ENCODE measurements at regions of chr15 and their contacts with region 1.

Region 1: GRCh38 chr15:74540761-74541493 is at the start of gene ARID3B:
- DNase-seq: peak; percentile 98
- H3K4me3 ChIP-seq: peak within 1 kb of the TSS; percentile 99
- H3K27ac ChIP-seq: peak within 1 kb of the TSS; percentile 93
- H3K4me1 ChIP-seq: peaks cover 21% of the 10 kb centered on the region
- H3K27me3 ChIP-seq: no peaks in the 10 kb centered on the region
- CTCF ChIP-seq: no peak
- total RNA-seq, gene ARID3B: 17.3 and 18.3 TPM in 2 replicates

Region 2: DNA sequence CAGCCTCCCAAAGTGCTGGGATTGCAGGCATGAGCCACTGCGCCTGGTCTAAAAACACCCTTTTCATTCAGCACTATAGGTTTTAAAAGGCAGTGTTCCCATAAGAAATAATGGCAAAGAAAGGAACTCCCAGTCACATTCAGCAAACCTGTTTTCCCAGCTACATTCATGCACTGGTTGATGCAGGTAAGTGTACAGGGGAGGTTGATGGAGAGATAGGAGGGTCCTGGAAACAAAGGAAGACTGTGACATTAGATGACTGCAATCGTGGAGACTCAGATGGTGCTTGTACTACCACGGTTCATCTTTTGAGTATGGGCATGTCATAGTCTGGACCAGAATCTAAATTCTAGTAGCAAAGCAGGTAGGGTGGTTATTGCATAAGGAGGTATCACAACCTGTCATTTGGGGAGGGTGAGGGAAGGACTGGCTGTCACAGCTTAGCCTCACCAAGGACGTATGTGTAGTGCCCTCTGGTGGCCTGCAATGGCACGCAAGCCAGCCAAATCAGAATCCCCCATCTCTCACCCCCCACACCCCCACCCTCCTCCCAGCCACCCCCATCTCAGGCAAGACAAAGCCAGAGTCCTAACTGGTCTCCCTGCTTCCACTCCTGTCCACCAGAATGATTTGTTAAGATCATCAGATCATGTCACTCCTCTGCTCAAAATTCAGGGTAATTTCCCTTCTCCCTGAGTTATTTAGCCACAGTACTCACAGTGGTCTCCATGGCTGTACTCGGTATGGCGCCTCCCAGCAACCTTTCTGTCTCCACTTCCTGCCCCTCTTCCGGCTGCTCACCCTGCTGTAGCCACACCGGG is 51.2 kb before region 1 on chr15:
- CTCF ChIA-PET with region 1: interaction called, 10 read pairs
- POLR2A ChIA-PET with region 1: no interaction called
- intact Hi-C with region 1: no loop called
- DNase-seq: peak; percentile 64
- H3K4me3 ChIP-seq: no peak overlapping the region
- H3K27ac ChIP-seq: no peak overlapping the region
- H3K4me1 ChIP-seq: no peaks in the 10 kb centered on the region
- H3K27me3 ChIP-seq: no peaks in the 10 kb centered on the region
- CTCF ChIP-seq: peak; percentile 77

Measured in A673 (cell line).